Dorsolateral prefrontal cortex (tissue), 120 donors: ENCODE measurements at regions of chr4 and their contacts with region 1.

Region 1: GRCh38 chr4:55948726-55949474 is at the start of gene CEP135:
- DNase-seq: peak; percentile 80 to 95 (median 90)
- H3K4me3 ChIP-seq: peak within 1 kb of the TSS; percentile 59 to 97 (median 85)
- H3K27ac ChIP-seq: peak within 1 kb of the TSS; percentile 10 to 93 (median 80)
- H3K27me3 ChIP-seq: no peaks in the 10 kb centered on the region
- CTCF ChIP-seq: peak; percentile 86 to 100 (median 97)
- total RNA-seq, gene CEP135: 3.8 to 10.7 (median 6.2) TPM

Region 2: GRCh38 chr4:55830716-55831115 is 118.2 kb before region 1 on chr4:
- intact Hi-C with region 1: no loop called
- DNase-seq: no peak
- H3K4me3 ChIP-seq: no peak overlapping the region
- H3K27ac ChIP-seq: no peak overlapping the region
- H3K27me3 ChIP-seq: peaks cover 0 to 43% (median 4%) of the 10 kb centered on the region in 45 donors
- CTCF ChIP-seq: no peak

Region 3: GRCh38 chr4:55859711-55860110 is 89.2 kb before region 1 on chr4:
- intact Hi-C with region 1: loop called in 1 of 2 experiments (anchors 5 kb)
- DNase-seq: no peak
- H3K4me3 ChIP-seq: no peak overlapping the region
- H3K27ac ChIP-seq: no peak overlapping the region
- H3K27me3 ChIP-seq: no peaks in the 10 kb centered on the region
- CTCF ChIP-seq: no peak

Region 4: GRCh38 chr4:56301181-56302076 is 352.5 kb after region 1 on chr4:
- intact Hi-C with region 1: loop called (anchors 2 kb)
- DNase-seq: peak; percentile 56 to 88 (median 76)
- H3K4me3 ChIP-seq: peak overlapping the region in 38 of 59 donors; percentile 1 to 54 (median 28)
- H3K27ac ChIP-seq: peak overlapping the region in 4 of 59 donors; percentile 17 to 20 (median 19)
- H3K27me3 ChIP-seq: no peaks in the 10 kb centered on the region
- CTCF ChIP-seq: peak; percentile 44 to 90 (median 79)

Region 5: GRCh38 chr4:56799824-56800756 is 851.2 kb after region 1 on chr4:
- intact Hi-C with region 1: loop called in 1 of 2 experiments (anchors 5 kb)
- DNase-seq: peak; percentile 40 to 91 (median 87)
- H3K4me3 ChIP-seq: peak overlapping the region; percentile 49 to 83 (median 70)
- H3K27ac ChIP-seq: peak overlapping the region in 51 of 59 donors; percentile 3 to 89 (median 74)
- H3K27me3 ChIP-seq: no peaks in the 10 kb centered on the region
- CTCF ChIP-seq: peak; percentile 62 to 96 (median 87)